ENCODE measurements at regions of chr22 and their contacts with region 1.

Region 1: DNA sequence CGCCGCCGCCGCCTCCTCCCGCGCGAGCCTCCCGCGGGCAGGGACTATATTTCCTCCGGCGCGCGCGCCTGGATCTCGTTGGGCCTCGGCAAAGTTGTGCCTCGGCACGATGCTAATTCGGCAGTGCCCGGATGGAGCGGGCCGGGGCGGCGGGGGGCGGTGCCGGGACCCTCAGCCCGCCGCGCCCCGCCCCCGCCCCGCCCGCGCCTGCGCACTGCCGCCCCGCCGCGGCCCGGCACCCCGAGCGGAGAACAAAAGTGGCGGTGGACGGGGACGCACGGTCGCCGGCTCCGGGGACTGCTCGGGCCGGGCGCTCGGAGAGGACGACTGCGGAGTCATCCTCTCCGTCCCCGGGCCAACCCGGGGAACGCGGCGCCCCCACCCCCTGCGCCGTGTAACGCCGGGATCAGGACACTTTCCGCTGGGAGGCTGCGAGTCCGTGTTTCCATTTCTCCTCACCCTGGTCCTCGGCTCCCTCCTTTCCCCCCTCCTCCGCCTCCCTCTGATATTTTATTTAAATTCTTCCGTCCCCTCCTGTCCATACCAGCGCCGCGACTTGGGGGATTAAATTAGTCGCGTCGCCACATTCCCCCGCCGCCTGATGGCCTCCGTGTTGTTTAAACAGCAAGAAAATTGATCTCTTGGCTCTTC is at the start of gene PHF21B:
- DNase-seq: peak in 1 of 2 experiments; percentile 91
- H3K4me3 ChIP-seq: peak within 1 kb of the TSS; percentile 78 to 96 (median 86)
- H3K27ac ChIP-seq: peak within 1 kb of the TSS; percentile 87
- H3K4me1 ChIP-seq: peaks cover 2 to 25% (median 15%) of the 10 kb centered on the region in 4 experiments
- H3K27me3 ChIP-seq: no peaks in the 10 kb centered on the region
- CTCF ChIP-seq: no peak
- EP300 ChIP-seq: no peak
- POLR2A ChIP-seq: peak; percentile 72 to 83
- RAD21 ChIP-seq: no peak; a peak in 1 of 4 replicates
- total RNA-seq, gene PHF21B: 57.2 and 68.1 TPM in 2 replicates

Region 2: DNA sequence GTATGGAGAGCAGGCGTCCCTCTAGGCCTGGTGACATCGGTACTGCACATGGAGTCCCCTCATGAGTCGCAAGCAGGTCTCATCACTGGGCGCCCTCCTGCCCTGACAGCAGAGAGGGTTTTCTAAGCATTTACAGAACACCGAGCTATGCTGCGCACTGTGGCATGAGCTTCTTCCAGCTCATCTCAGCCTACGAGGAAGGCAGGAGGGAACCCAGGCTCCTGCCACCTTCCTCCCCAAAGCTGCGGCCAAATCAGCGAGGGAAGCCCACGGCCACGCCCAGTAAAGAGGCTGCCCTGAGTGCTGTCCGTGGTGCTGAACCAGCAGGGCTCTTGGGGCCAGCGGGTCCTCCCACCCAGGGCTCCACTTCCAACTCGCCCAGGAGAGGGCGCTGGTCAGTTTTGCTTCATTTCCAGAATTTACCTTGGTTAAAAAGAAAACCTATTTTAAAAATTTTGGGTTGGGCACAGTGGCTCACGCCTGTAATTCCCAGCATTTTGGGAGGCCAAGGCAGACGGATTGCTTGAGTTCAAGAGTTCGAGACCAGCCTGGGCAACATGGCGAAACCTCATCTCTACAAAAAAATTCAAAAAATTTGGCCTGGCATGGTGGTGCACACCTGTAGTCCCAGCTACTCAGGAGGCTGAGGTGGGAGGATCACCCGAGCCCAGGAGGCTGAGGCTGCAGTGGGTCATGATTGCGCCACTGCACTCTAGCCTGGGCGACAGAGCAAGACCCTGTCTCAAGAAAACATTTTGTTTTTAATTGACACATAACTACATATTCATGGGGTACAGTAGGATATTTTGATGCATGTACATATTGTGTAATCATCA is 34.4 kb before region 1 on chr22:
- CTCF ChIA-PET with region 1: interaction called, 5 read pairs
- POLR2A ChIA-PET with region 1: interaction called, 204 read pairs
- DNase-seq: peak; percentile 64 to 98
- H3K4me3 ChIP-seq: no peak overlapping the region
- H3K27ac ChIP-seq: no peak overlapping the region
- H3K4me1 ChIP-seq: peaks cover 0 to 27% (median 11%) of the 10 kb centered on the region in 4 experiments; a peak in 6 of 7 replicates
- H3K27me3 ChIP-seq: no peaks in the 10 kb centered on the region; a peak in 1 of 7 replicates
- CTCF ChIP-seq: peak; percentile 76 to 89 (median 87)
- EP300 ChIP-seq: peak in 1 of 2 experiments; percentile 61; a peak in 1 of 3 replicates
- POLR2A ChIP-seq: no peak
- RAD21 ChIP-seq: peak; percentile 75 to 84

Region 3: DNA sequence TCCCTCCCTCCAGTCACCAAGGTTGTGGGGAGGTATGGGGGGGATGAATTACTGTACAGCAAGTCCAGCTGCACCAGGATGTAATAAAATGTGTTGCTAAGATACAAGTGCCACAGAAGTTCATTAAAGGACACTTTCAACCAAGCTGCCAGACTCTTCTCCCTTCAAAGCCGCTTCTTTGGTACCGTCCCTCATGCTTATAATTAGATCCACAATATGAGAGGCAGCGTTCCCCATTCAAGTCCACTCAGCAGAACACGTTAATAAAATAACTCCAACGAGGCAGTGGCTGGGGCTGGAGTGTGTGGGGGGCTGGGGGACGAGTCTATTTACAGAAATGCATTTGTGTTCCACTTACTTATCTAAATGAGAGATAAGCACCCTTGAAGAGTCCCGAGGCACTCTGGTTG is 14.9 kb before region 1 on chr22:
- CTCF ChIA-PET with region 1: interaction called, 5 read pairs
- POLR2A ChIA-PET with region 1: interaction called, 208 read pairs
- DNase-seq: no peak
- H3K4me3 ChIP-seq: no peak overlapping the region
- H3K27ac ChIP-seq: no peak overlapping the region
- H3K4me1 ChIP-seq: peaks cover 0 to 21% (median 6%) of the 10 kb centered on the region in 4 experiments; a peak in 6 of 7 replicates
- H3K27me3 ChIP-seq: no peaks in the 10 kb centered on the region
- CTCF ChIP-seq: no peak
- EP300 ChIP-seq: no peak
- POLR2A ChIP-seq: no peak
- RAD21 ChIP-seq: no peak

Region 4: GRCh38 chr22:45026511-45026910 is 16.5 kb after region 1 on chr22:
- CTCF ChIA-PET with region 1: no interaction called
- POLR2A ChIA-PET with region 1: interaction called, 44 read pairs
- DNase-seq: no peak
- H3K4me3 ChIP-seq: no peak overlapping the region
- H3K27ac ChIP-seq: no peak overlapping the region
- H3K4me1 ChIP-seq: peaks cover 5 to 11% (median 5%) of the 10 kb centered on the region in 4 experiments; a peak in 5 of 7 replicates
- H3K27me3 ChIP-seq: no peaks in the 10 kb centered on the region
- CTCF ChIP-seq: no peak
- EP300 ChIP-seq: no peak
- POLR2A ChIP-seq: no peak
- RAD21 ChIP-seq: no peak

Region 5: DNA sequence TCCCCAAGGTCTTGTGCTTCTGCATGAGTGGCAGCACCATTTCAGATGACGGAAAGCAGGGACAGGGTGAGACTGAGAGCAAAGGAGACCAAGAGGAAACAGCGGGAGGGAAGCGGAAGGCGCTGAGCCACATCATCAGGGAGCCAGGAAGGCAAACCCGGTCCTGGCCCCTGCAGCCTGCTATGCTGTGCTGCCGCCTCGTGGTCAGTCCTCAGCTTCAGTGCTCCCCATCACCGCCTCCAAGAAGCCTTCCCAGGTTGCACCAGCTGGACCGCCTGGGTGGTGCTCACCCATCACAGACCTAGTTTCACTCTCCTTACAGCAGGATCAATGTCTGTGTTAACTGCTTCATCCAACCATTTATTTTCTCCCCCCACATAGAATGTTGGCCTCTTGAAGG is 72.8 kb after region 1 on chr22:
- CTCF ChIA-PET with region 1: interaction called, 23 read pairs
- POLR2A ChIA-PET with region 1: interaction called, 52 read pairs
- DNase-seq: peak in 1 of 2 experiments; percentile 81
- H3K4me3 ChIP-seq: no peak overlapping the region
- H3K27ac ChIP-seq: no peak overlapping the region
- H3K4me1 ChIP-seq: peaks cover 0 to 6% (median 2%) of the 10 kb centered on the region in 4 experiments; a peak in 2 of 7 replicates
- H3K27me3 ChIP-seq: peaks cover 0 to 3% (median 0%) of the 10 kb centered on the region in 4 experiments; a peak in 1 of 7 replicates
- CTCF ChIP-seq: peak; percentile 76 to 92 (median 80)
- EP300 ChIP-seq: no peak
- POLR2A ChIP-seq: no peak
- RAD21 ChIP-seq: peak; percentile 89 to 94

Region 6: DNA sequence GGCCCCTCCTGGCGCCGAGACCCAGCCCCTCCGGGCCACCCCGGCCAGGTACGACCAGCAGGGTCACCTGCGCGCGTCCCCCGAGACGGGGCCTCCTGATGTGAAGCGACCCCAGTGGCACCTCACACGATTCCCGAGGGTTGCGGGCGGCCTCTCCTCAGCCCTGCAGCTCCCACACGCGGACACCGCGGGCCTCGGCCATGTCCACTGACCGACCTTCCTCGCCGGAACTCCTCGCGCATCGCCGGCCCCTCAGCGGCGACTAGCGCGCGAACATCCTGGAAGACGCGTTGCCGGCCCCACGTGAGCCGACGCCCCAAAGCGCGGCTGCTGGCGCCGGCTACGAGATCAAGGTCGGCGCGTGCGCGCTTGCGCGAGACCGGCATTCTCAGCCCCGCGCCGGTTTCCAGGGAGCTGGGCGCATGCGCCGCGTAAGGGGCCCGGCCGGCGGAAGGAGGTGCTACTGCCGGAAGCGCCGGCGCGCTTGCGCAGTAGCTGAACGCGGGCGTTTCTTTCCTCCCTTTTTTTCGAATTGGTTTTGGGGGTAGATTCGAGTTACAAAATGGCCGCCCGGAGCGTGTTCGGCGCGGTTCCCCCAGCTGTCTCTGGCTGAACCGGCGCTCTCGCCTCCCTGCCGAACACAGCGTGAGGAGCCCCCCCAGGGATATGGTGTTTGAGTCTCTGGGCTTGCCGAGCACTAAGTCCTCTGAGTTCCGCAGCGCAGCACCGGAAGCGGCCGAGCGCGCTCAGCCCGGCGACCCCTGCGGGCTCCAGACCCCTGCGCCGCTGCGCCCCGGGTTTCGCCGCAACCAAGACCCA is 153.7 kb after region 1 on chr22 and contains the start of gene NUP50:
- CTCF ChIA-PET with region 1: no interaction called
- POLR2A ChIA-PET with region 1: interaction called, 16 read pairs
- DNase-seq: peak; percentile 93 to 97
- H3K4me3 ChIP-seq: peak within 1 kb of the TSS; percentile 85 to 91 (median 90)
- H3K27ac ChIP-seq: peak within 1 kb of the TSS; percentile 85
- H3K4me1 ChIP-seq: peaks cover 3 to 17% (median 10%) of the 10 kb centered on the region in 4 experiments; a peak in 6 of 7 replicates
- H3K27me3 ChIP-seq: no peaks in the 10 kb centered on the region
- CTCF ChIP-seq: no peak
- EP300 ChIP-seq: no peak
- POLR2A ChIP-seq: peak; percentile 89
- RAD21 ChIP-seq: 0 out of 4 replicates have a peak, but pooled peaks of 1 of the 2 experiments have one; percentile 3
- total RNA-seq, gene NUP50: 112 and 118 TPM in 2 replicates

Region 7: DNA sequence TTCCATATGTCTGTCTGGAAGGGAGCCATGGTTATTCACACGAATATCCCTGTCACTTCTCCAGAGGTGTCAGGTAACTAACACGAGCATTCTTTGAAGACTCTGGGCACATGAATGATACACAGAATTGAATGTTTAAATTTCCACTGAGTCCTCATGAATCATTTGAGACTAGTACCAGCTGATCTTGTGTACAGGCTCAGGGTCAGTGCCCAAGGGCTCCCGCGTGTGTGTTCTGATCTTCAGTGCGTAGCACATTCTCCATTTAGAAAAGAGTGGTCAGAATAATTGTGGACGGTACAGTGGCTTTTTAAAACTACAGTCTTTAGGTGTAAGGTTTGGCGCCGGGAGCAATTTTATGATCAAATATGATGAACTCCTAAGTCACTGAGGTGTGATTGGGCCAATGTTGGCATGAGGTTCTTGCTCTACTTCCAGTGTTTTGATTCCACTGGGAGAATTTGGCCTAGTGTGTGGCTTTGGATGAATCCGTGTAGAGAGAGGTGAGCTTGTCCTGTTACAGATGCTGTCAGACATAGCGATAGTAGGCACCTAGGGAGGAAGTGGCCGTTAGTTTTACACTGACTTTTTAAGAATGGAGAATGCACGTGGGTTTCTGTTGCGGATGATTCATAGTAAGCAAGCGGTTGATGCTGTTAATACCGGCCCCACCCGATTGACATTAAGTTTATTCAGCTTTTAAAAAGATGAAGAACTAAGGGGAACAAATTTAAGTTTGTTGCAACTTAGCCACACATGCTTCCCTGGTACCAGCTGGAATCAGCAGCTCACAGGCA is 175.9 kb after region 1 on chr22:
- CTCF ChIA-PET with region 1: no interaction called
- POLR2A ChIA-PET with region 1: no interaction called
- DNase-seq: no peak
- H3K4me3 ChIP-seq: no peak overlapping the region
- H3K27ac ChIP-seq: no peak overlapping the region
- H3K4me1 ChIP-seq: peaks cover 0 to 3% (median 1%) of the 10 kb centered on the region in 4 experiments; a peak in 3 of 7 replicates
- H3K27me3 ChIP-seq: no peaks in the 10 kb centered on the region
- CTCF ChIP-seq: no peak
- EP300 ChIP-seq: no peak
- POLR2A ChIP-seq: no peak
- RAD21 ChIP-seq: no peak